Activated naive CD4-positive, alpha-beta T cell treated with anti-CD3 and anti-CD28 coated beads for 36 hours (primary cell): ENCODE measurements at regions of chr6 and their contacts with region 1.

Region 1: DNA sequence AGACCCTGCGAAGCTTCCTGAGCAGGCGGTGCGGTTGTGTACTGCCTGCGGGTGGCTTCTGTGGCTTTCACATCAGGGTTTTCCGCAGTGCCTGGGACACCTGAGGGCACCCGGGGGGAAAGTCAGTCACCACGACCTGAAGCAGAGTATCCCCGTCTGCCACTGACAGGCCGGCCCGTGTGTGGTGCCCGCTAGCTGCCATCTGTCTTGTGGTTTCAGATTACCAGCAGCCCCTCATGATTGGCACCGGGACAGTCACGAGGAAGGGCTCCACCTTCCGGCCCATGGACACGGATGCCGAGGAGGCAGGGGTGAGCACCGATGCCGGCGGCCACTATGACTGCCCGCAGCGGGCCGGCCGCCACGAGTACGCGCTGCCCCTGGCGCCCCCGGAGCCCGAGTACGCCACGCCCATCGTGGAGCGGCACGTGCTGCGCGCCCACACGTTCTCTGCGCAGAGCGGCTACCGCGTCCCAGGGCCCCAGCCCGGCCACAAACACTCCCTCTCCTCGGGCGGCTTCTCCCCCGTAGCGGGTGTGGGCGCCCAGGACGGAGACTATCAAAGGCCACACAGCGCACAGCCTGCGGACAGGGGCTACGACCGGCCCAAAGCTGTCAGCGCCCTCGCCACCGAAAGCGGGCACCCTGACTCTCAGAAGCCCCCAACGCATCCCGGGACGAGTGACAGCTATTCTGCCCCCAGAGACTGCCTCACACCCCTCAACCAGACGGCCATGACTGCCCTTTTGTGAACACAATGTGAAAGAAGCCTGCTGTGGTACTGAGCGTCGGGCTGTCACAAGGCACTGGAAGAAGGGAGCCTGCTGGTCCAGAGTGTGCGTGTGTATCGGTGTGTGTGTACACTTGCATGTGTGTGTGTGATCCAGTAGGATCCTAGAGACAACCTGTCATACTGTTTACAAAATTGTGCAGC is 54.4 kb downstream of the GOPC start:
- DNase-seq: peak; percentile 52
- H3K4me3 Mint-ChIP-seq: peak overlapping the region; percentile 67
- H3K27ac Mint-ChIP-seq: no peak overlapping the region
- H3K4me1 Mint-ChIP-seq: peaks cover 37% of the 10 kb centered on the region
- H3K27me3 Mint-ChIP-seq: peaks cover 6% of the 10 kb centered on the region

Region 2: DNA sequence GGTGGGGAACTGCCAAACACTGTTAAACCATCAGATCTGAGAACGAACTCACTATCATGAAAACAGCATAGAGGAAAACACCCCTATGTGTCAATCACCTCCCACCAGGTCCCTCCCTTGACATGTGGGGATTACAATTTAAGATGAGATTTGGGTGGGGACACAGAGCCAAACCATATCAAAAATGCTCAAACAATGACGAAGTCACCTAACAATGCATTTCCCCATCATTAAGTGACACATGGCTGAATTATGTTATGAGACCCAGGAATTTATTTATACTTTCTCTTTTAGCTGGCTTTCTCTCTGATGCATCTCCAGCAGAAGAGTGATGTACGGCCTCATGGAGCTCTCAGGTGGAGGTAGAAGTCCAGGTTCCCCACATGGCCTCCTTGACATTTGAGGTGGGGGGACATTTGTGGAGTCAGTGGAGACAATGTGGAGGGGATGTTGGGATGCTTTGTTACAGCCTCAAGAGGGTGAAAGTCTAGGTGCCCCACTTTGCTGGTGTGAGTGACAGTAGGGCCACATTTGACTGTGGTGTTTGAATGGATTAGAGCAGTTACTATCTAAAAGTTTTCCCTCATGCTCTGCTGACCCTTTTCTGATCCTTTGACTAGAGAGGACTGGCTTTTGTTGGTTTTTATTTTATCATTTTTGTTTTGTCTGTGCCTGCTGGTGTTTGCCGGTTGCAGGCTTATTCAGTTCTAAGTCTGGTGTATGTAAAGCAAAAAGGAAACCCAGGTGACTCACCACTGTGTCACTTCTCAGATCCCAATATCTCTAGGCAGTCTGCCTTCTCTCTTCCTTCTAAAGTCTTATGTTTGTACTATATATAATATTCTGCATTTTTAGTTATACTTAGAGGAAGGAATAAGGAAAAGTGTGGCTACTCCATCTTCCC is 83.9 kb before region 1 on chr6:
- CTCF ChIA-PET with region 1: no interaction called
- intact Hi-C with region 1: loop called (anchors 1 kb)
- DNase-seq: peak; percentile 55
- H3K4me3 Mint-ChIP-seq: no peak overlapping the region
- H3K27ac Mint-ChIP-seq: peak overlapping the region; percentile 54
- H3K4me1 Mint-ChIP-seq: peaks cover 13% of the 10 kb centered on the region
- H3K27me3 Mint-ChIP-seq: peaks cover 20% of the 10 kb centered on the region

Region 3: DNA sequence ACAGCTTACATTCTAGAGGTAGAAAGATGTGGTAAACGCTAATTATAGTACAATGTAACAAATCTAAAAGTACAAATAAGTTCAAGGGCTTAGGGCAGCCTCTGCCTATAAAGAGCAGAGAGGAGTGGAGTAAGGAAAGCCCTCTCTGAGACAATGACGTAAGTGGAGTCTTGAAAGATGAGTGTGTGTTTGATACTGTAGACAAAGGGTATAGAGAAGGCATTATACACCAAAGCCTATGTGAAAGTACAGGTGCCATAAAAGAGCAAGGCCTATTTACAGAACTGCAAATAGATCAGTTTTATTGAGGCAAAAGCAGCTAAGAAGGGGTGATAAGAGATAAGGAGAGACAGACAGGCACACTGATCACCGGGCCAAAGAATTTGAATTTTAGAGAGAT is 43.5 kb after region 1 on chr6:
- CTCF ChIA-PET with region 1: no interaction called
- intact Hi-C with region 1: no loop called
- DNase-seq: no peak
- H3K4me3 Mint-ChIP-seq: no peak overlapping the region
- H3K27ac Mint-ChIP-seq: no peak overlapping the region
- H3K4me1 Mint-ChIP-seq: peaks cover 30% of the 10 kb centered on the region
- H3K27me3 Mint-ChIP-seq: no peaks in the 10 kb centered on the region